Caco-2 (cell line): ENCODE measurements at regions of chr10 and their contacts with region 1.

Region 1: GRCh38 chr10:29105531-29106215 is 183.2 kb upstream of the LYZL1 start:
- DNase-seq: peak; percentile 50 to 55
- H3K4me3 ChIP-seq: no peak overlapping the region
- H3K4me3 Mint-ChIP-seq: peak overlapping the region; percentile 64
- H3K27ac Mint-ChIP-seq: peak overlapping the region; percentile 88
- H3K4me1 ChIP-seq: peaks cover 80% of the 10 kb centered on the region
- H3K4me1 Mint-ChIP-seq: peaks cover 70% of the 10 kb centered on the region
- H3K27me3 ChIP-seq: no peaks in the 10 kb centered on the region
- H3K27me3 Mint-ChIP-seq: no peaks in the 10 kb centered on the region
- CTCF ChIP-seq: no peak

Region 2: GRCh38 chr10:28925121-28925698 is 180.5 kb before region 1 on chr10:
- CTCF ChIA-PET with region 1: no interaction called
- POLR2A ChIA-PET with region 1: no interaction called
- intact Hi-C with region 1: no loop called
- DNase-seq: no peak
- H3K4me3 ChIP-seq: no peak overlapping the region
- H3K4me3 Mint-ChIP-seq: no peak overlapping the region
- H3K27ac Mint-ChIP-seq: peak overlapping the region; percentile 15
- H3K4me1 ChIP-seq: peaks cover 24% of the 10 kb centered on the region
- H3K4me1 Mint-ChIP-seq: peaks cover 14% of the 10 kb centered on the region
- H3K27me3 ChIP-seq: no peaks in the 10 kb centered on the region
- H3K27me3 Mint-ChIP-seq: no peaks in the 10 kb centered on the region
- CTCF ChIP-seq: no peak

Region 3: DNA sequence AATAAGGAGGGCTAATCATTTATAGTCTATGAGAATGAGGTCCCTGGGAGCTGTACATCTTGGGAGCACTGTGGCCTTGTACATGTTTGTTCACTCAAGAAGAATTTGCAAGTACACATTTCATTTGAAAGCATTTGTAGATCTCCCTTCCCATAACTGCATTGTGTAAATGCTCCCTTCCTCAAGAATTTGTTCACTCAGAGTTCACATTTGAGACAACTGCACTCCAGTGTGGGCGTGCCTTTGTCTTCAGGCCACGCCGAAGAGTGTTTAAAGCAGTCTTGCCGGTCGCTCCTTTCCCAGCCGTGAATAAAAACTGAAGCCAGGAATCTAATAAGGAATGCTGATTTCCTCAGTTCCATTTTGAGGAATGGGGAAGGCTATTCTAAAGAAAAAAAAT is 107.9 kb before region 1 on chr10:
- CTCF ChIA-PET with region 1: interaction called, 5 read pairs
- POLR2A ChIA-PET with region 1: no interaction called
- intact Hi-C with region 1: loop called (anchors 2 kb)
- DNase-seq: peak; percentile 46 to 54
- H3K4me3 ChIP-seq: no peak overlapping the region
- H3K4me3 Mint-ChIP-seq: no peak overlapping the region
- H3K27ac Mint-ChIP-seq: peak overlapping the region; percentile 3
- H3K4me1 ChIP-seq: peaks cover 16% of the 10 kb centered on the region
- H3K4me1 Mint-ChIP-seq: peaks cover 25% of the 10 kb centered on the region
- H3K27me3 ChIP-seq: no peaks in the 10 kb centered on the region
- H3K27me3 Mint-ChIP-seq: no peaks in the 10 kb centered on the region
- CTCF ChIP-seq: no peak

Region 4: GRCh38 chr10:29022473-29022872 is 83.2 kb before region 1 on chr10:
- CTCF ChIA-PET with region 1: no interaction called
- POLR2A ChIA-PET with region 1: no interaction called
- intact Hi-C with region 1: loop called (anchors 10 kb)
- DNase-seq: peak; percentile 63 to 73
- H3K4me3 ChIP-seq: no peak overlapping the region
- H3K4me3 Mint-ChIP-seq: peak overlapping the region; percentile 35
- H3K27ac Mint-ChIP-seq: peak overlapping the region; percentile 72
- H3K4me1 ChIP-seq: peaks cover 36% of the 10 kb centered on the region
- H3K4me1 Mint-ChIP-seq: peaks cover 33% of the 10 kb centered on the region
- H3K27me3 ChIP-seq: no peaks in the 10 kb centered on the region
- H3K27me3 Mint-ChIP-seq: no peaks in the 10 kb centered on the region
- CTCF ChIP-seq: no peak

Region 5: DNA sequence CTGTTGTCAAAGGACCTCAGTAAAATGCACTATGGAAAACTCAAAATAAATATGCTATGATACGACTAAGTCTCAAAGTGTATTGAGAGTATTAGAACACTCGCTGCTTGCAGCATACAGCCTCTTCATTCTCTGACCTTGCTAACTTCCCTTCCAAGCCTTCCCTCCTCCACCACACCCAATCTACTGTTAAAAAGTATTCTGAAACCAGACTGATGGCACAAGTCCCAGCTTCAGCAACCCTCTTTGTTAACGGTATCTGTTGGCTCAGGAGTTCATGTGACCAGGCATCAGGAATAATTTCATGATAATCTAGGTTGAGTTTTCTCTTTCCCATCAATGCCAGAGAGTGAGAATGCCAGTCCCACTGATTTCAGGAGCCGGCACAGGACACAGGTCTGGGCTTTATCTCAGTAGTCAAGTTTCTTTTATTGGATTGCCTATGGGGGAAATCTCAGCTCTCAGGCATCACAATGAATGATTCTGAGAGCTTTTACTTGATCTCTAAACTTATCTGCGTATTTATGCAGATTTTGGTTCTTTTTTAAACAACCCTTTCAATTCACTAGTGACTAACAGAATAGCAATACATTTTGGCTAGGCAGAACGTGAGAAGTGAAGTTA is 47.8 kb before region 1 on chr10:
- CTCF ChIA-PET with region 1: no interaction called
- POLR2A ChIA-PET with region 1: interaction called, 10 read pairs
- intact Hi-C with region 1: no loop called
- DNase-seq: no peak
- H3K4me3 ChIP-seq: no peak overlapping the region
- H3K4me3 Mint-ChIP-seq: no peak overlapping the region
- H3K27ac Mint-ChIP-seq: no peak overlapping the region
- H3K4me1 ChIP-seq: no peaks in the 10 kb centered on the region
- H3K4me1 Mint-ChIP-seq: peaks cover 8% of the 10 kb centered on the region
- H3K27me3 ChIP-seq: no peaks in the 10 kb centered on the region
- H3K27me3 Mint-ChIP-seq: no peaks in the 10 kb centered on the region
- CTCF ChIP-seq: no peak

Region 6: DNA sequence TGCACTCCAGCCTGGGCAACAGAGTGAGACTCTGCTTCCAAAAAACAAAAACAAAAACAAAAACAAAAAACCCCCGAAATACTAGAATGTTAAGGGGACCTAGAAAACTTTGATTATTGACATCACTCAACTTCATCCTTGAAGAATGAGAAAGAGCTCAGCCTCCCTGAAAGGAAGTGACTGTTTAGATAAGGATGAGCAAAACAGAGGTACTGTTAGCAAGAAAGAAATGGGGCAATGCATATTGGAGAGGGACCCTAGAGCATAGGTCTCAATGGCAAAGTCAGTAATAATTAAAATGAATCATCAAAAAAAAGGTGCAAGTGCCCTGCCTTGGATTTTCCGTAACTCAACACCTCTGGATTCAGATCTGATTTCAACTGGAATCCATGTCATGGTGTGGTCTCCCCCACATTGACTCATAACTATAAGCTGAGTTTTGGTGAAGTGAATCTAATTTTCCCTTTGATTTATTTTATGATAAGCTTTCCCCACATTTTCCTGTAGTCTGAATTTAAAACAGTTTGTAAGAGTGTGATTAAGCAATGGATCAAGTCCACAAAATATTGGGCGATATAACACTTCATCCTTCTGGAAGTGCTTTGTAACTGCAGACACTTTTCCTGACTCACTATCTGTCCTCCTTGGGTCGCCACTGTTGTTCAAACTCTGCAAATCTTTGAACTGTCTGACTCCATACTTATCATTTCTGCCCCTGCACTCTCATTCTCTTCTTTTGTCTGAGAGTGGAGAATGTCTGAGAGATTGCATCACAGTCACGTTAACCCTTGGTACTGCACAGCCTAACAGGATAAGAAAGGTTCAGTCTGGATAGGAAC is 41.6 kb before region 1 on chr10:
- CTCF ChIA-PET with region 1: interaction called, 3 read pairs
- POLR2A ChIA-PET with region 1: interaction called, 5 read pairs
- intact Hi-C with region 1: loop called (anchors 1 kb)
- DNase-seq: peak; percentile 87 to 89
- H3K4me3 ChIP-seq: 0 out of 2 replicates have a peak overlapping the region, but pooled peaks have one; percentile 14
- H3K4me3 Mint-ChIP-seq: peak overlapping the region; percentile 32
- H3K27ac Mint-ChIP-seq: peak overlapping the region; percentile 68
- H3K4me1 ChIP-seq: peaks cover 60% of the 10 kb centered on the region
- H3K4me1 Mint-ChIP-seq: peaks cover 41% of the 10 kb centered on the region
- H3K27me3 ChIP-seq: no peaks in the 10 kb centered on the region
- H3K27me3 Mint-ChIP-seq: no peaks in the 10 kb centered on the region
- CTCF ChIP-seq: peak; percentile 19 to 47

Region 7: DNA sequence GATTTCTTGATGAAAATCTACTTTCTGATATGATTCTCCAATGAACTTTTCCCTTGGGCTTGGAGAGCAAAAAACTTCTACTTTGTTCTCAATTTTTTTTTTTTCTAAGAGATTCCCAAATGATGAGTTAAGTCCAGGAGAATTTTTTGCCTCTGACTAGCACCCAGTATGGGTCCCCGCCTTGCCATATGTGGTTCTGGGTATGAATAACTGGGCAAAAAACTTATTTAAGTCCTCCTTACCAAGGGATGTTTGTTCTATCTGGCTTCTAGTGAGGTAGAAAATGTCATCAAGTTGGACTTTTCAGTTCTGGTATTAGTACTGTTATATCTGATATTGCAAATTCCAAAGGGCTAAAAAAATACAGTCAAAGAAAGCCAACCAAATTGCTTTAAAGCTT is 35.4 kb after region 1 on chr10:
- CTCF ChIA-PET with region 1: no interaction called
- POLR2A ChIA-PET with region 1: no interaction called
- intact Hi-C with region 1: loop called (anchors 1 kb)
- DNase-seq: no peak
- H3K4me3 ChIP-seq: no peak overlapping the region
- H3K4me3 Mint-ChIP-seq: peak overlapping the region; percentile 6
- H3K27ac Mint-ChIP-seq: peak overlapping the region; percentile 90
- H3K4me1 ChIP-seq: peaks cover 32% of the 10 kb centered on the region
- H3K4me1 Mint-ChIP-seq: peaks cover 37% of the 10 kb centered on the region
- H3K27me3 ChIP-seq: no peaks in the 10 kb centered on the region
- H3K27me3 Mint-ChIP-seq: no peaks in the 10 kb centered on the region
- CTCF ChIP-seq: no peak